ENCODE measurements at regions of chr22 and their contacts with region 1.

Region 1: GRCh38 chr22:40443732-40444131 is 73.3 kb downstream of the SGSM3 start:
- DNase-seq: no peak
- H3K4me3 ChIP-seq: no peak overlapping the region
- H3K27ac ChIP-seq: no peak overlapping the region
- H3K4me1 ChIP-seq: no peaks in the 10 kb centered on the region
- H3K27me3 ChIP-seq: no peaks in the 10 kb centered on the region
- CTCF ChIP-seq: no peak
- POLR2A ChIP-seq: no peak

Region 2: GRCh38 chr22:40487663-40488249 is 44.0 kb after region 1 on chr22:
- intact Hi-C with region 1: loop called (anchors 5 kb)
- DNase-seq: no peak
- H3K4me3 ChIP-seq: no peak overlapping the region
- H3K27ac ChIP-seq: no peak overlapping the region
- H3K4me1 ChIP-seq: peaks cover 3% of the 10 kb centered on the region
- H3K27me3 ChIP-seq: no peaks in the 10 kb centered on the region
- CTCF ChIP-seq: peak in 3 of 4 experiments; percentile 33 to 67 (median 47)
- POLR2A ChIP-seq: no peak

Region 3: DNA sequence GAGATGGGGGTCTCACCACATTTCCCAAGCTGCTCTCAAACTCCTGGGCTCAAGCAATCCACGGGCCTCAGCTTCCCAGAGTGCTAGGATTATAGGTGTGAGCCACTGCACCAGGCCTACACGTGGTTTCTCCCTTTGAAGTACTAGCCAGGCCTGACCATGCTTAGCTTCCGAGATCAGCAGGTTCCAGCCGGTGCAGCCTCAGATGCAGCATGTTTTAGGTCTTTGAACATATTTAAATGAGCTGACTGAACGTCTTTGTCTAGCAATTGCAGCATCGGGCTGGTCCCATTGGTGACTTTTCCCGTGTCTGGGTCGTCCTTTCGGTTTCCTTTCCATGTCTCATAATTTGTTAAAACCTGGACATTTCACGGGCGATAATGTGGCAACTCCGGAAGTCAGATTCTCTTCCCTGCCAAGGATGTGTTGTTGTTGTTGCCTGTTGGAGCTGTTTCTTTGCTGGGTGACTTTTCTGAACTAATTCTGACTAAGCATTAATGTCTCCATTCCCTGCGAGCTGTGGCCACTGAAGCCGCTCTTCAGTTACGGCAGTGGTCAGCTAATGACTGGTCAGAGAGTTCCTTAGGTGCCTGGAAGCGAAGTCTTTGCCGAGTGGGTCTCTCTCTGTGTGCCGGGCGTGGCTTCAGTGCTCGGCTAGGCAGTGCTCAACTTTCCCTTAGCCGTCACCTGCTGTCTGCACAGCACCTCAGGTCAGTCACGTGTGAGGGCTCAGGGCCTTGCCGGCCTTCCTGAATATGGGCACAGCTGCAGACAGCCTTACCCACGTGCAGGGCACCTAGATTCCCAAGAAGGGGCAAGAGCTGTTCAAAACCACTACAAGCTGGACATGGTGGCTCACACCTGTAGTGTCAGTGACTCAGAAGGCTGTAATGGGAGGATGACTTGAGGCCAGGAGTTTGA is 1690.6 kb after region 1 on chr22:
- intact Hi-C with region 1: no loop called
- DNase-seq: no peak
- H3K4me3 ChIP-seq: no peak overlapping the region
- H3K27ac ChIP-seq: no peak overlapping the region
- H3K4me1 ChIP-seq: no peaks in the 10 kb centered on the region
- H3K27me3 ChIP-seq: no peaks in the 10 kb centered on the region
- CTCF ChIP-seq: no peak
- POLR2A ChIP-seq: no peak

Measured in prostate gland (tissue), 2 donors.